CD4-positive, alpha-beta memory T cell (primary cell): ENCODE measurements at regions of chr14 and their contacts with region 1.

Region 1: DNA sequence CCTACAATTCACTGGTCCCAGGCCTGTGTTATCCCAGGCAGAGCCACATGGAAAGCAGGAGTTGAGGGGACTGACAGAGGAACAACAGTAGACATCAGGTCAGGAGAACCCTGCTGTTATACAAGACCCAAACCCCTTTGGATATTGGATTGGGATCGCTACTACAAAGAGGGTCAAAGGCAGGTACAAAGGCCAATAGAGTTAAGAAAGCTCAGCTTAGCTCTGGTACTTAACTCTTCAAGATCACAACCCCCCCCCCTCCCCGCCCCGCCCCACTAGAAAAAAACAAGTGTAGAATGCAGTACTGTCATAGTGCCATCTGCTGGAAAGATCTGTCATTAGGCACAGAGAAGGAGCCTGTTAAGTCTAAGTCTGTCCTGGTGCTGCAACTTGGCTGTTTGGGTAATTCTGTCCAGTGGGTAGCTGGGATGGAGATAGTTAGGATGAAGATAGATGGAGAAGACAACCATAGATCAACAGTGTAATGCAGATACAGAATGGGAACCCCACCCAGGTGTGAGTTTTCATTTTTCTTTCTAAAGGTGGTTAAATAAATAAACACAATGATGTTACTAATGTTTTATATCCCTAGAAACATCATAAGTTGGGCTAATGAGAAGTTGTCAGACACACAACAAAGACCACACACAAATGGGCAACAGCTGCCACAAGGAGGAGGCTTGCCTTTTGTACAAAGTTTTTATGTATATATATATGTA is 17.2 kb downstream of the REM2 start:
- DNase-seq: peak; percentile 66 to 72 (median 67)
- H3K4me3 ChIP-seq: no peak overlapping the region
- H3K4me3 Mint-ChIP-seq: no peak overlapping the region
- H3K27ac ChIP-seq: no peak overlapping the region
- H3K27ac Mint-ChIP-seq: peak overlapping the region; percentile 12 to 65 (median 54)
- H3K4me1 ChIP-seq: peaks cover 4% of the 10 kb centered on the region
- H3K4me1 Mint-ChIP-seq: peaks cover 5 to 15% (median 5%) of the 10 kb centered on the region in 4 donors
- H3K27me3 ChIP-seq: no peaks in the 10 kb centered on the region
- H3K27me3 Mint-ChIP-seq: no peaks in the 10 kb centered on the region

Region 2: GRCh38 chr14:22886500-22887259 is 13.6 kb before region 1 on chr14:
- CTCF ChIA-PET with region 1: interaction called, 84 read pairs
- POLR2A ChIA-PET with region 1: interaction called, 14 read pairs
- intact Hi-C with region 1: loop called (anchors 1 kb)
- DNase-seq: peak; percentile 73 to 85 (median 78)
- H3K4me3 ChIP-seq: peak overlapping the region; percentile 24 to 30
- H3K4me3 Mint-ChIP-seq: peak overlapping the region; percentile 87 to 97 (median 94)
- H3K27ac ChIP-seq: peak overlapping the region; percentile 68
- H3K27ac Mint-ChIP-seq: peak overlapping the region; percentile 93 to 99 (median 97)
- H3K4me1 ChIP-seq: peaks cover 57% of the 10 kb centered on the region
- H3K4me1 Mint-ChIP-seq: peaks cover 34 to 85% (median 59%) of the 10 kb centered on the region in 4 donors
- H3K27me3 ChIP-seq: no peaks in the 10 kb centered on the region
- H3K27me3 Mint-ChIP-seq: no peaks in the 10 kb centered on the region

Region 3: DNA sequence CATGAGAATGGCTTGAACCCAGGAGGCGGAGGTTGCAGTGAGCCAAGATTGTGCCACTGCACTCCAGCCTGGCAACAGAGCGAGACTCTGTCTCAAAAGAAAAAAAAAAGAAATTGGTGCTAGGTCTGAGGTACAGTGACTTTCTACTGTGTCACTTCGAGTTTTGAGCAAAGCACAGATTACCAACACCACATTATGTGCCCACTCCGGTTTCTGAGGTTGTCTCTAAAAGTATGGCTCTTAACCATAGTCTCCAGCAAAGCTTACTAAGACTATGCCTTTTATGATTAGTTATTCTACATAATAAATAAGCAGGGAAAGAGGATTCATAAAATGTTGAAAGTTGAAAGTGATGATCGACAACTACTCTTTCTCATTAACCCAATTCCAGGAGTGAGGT is 10.7 kb after region 1 on chr14:
- CTCF ChIA-PET with region 1: interaction called, 45 read pairs
- POLR2A ChIA-PET with region 1: no interaction called
- intact Hi-C with region 1: no loop called
- DNase-seq: no peak
- H3K4me3 ChIP-seq: no peak overlapping the region
- H3K4me3 Mint-ChIP-seq: no peak overlapping the region
- H3K27ac ChIP-seq: no peak overlapping the region
- H3K27ac Mint-ChIP-seq: no peak overlapping the region
- H3K4me1 ChIP-seq: peaks cover 19% of the 10 kb centered on the region
- H3K4me1 Mint-ChIP-seq: peaks cover 11 to 35% (median 27%) of the 10 kb centered on the region in 4 donors
- H3K27me3 ChIP-seq: no peaks in the 10 kb centered on the region
- H3K27me3 Mint-ChIP-seq: no peaks in the 10 kb centered on the region

Region 4: DNA sequence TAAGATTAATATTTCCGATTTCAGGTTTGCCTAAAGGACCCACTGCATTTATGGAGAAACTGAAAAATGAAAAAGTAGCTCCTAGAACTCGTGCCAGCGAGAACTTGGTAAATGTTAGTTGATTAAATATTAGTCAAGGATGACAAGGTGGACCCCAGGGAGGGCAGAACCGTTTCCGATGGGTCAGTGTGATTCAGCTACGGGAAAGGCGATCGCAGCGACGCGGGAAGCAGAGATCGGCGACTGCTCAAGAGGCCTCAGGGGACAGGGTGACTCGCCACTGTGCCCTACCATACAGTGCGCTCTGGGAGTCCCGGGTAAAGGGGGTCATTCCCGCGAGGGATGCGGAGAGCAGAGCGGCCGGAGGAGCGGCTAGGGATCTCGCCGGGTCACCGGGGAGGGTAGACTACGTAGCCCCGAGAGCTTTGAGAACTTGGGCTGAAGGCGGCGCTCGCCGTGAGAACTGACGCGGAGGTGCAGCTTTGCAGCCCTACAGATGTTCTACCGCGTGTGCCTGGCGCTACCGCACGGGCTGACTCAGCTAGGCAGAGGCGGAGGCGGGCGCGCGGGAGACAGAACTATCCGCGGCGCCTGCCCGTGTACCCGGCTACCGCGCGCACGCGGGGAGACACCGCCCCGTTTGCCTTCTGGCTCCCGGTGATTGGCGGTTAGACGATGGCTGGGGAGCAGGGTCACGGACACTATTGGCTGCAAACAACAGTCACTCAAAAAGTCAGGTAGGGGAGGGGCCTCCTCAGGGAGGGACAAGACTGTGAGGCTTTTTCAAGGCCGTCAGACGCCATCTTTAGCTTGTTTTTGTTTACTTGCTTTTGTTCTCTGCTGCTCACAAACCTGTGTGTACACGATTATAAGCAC is 106.5 kb after region 1 on chr14:
- CTCF ChIA-PET with region 1: no interaction called
- POLR2A ChIA-PET with region 1: no interaction called
- intact Hi-C with region 1: no loop called
- DNase-seq: peak; percentile 99
- H3K4me3 ChIP-seq: peak overlapping the region; percentile 96
- H3K4me3 Mint-ChIP-seq: peak overlapping the region; percentile 94 to 99 (median 97)
- H3K27ac ChIP-seq: peak overlapping the region; percentile 80
- H3K27ac Mint-ChIP-seq: peak overlapping the region; percentile 90 to 99 (median 97)
- H3K4me1 ChIP-seq: peaks cover 37% of the 10 kb centered on the region
- H3K4me1 Mint-ChIP-seq: peaks cover 17 to 52% (median 34%) of the 10 kb centered on the region in 4 donors
- H3K27me3 ChIP-seq: no peaks in the 10 kb centered on the region
- H3K27me3 Mint-ChIP-seq: no peaks in the 10 kb centered on the region

Region 5: GRCh38 chr14:23034483-23035302 is 134.5 kb after region 1 on chr14 and contains the start of gene PSMB5:
- CTCF ChIA-PET with region 1: no interaction called
- POLR2A ChIA-PET with region 1: no interaction called
- intact Hi-C with region 1: no loop called
- DNase-seq: peak; percentile 93 to 96 (median 93)
- H3K4me3 ChIP-seq: peak within 1 kb of the TSS; percentile 66 to 90
- H3K4me3 Mint-ChIP-seq: peak within 1 kb of the TSS; percentile 87 to 98 (median 93)
- H3K27ac ChIP-seq: peak within 1 kb of the TSS; percentile 89
- H3K27ac Mint-ChIP-seq: peak within 1 kb of the TSS; percentile 89 to 99 (median 98)
- H3K4me1 ChIP-seq: peaks cover 19% of the 10 kb centered on the region
- H3K4me1 Mint-ChIP-seq: peaks cover 17 to 43% (median 31%) of the 10 kb centered on the region in 4 donors
- H3K27me3 ChIP-seq: no peaks in the 10 kb centered on the region
- H3K27me3 Mint-ChIP-seq: no peaks in the 10 kb centered on the region
- total RNA-seq, gene PSMB5: 31.4 to 33.6 TPM